Breast epithelium (tissue), 4 donors: ENCODE measurements at regions of chr3 and their contacts with region 1.

Region 1: GRCh38 chr3:170307671-170308403 is 49.7 kb upstream of the SKIL start:
- DNase-seq: no peak
- H3K4me3 ChIP-seq: no peak overlapping the region
- H3K27ac ChIP-seq: no peak overlapping the region
- H3K4me1 ChIP-seq: no peaks in the 10 kb centered on the region
- H3K27me3 ChIP-seq: no peaks in the 10 kb centered on the region
- CTCF ChIP-seq: no peak
- POLR2A ChIP-seq: no peak

Region 2: DNA sequence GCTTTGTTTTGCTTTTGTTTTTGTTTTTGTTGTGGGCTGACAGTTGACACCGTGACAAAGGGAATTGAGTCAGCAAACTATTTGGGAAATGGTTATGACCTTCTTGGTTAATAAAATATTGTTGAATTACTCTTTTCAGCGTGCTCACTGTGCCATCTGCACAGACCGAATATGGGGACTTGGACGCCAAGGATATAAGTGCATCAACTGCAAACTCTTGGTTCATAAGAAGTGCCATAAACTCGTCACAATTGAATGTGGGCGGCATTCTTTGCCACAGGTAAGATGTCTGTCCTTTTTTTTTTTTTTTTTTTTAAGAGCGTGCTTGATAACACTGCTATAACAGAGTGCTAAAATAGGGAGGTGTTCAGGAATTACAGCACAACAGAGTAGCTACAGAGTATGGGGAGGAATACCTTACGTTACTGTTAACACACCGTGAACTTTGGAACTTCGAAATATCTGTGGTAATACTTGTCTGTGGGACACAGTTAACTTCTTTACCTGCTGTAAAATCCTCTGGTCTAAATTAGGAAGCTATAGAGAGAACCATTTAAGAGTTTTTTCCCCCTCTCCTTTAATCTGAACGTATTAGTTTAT is 37.5 kb before region 1 on chr3:
- intact Hi-C with region 1: no loop called
- DNase-seq: no peak
- H3K4me3 ChIP-seq: no peak overlapping the region
- H3K27ac ChIP-seq: no peak overlapping the region
- H3K4me1 ChIP-seq: no peaks in the 10 kb centered on the region
- H3K27me3 ChIP-seq: no peaks in the 10 kb centered on the region
- CTCF ChIP-seq: no peak
- POLR2A ChIP-seq: no peak

Region 3: GRCh38 chr3:170317954-170318353 is 10.1 kb after region 1 on chr3:
- intact Hi-C with region 1: loop called (anchors 2 kb)
- DNase-seq: no peak
- H3K4me3 ChIP-seq: no peak overlapping the region
- H3K27ac ChIP-seq: no peak overlapping the region
- H3K4me1 ChIP-seq: no peaks in the 10 kb centered on the region
- H3K27me3 ChIP-seq: no peaks in the 10 kb centered on the region
- CTCF ChIP-seq: no peak
- POLR2A ChIP-seq: no peak

Region 4: GRCh38 chr3:170414202-170414663 is 106.4 kb after region 1 on chr3:
- intact Hi-C with region 1: loop called (anchors 5 kb)
- DNase-seq: peak in 1 of 2 donors; percentile 32
- H3K4me3 ChIP-seq: no peak overlapping the region
- H3K27ac ChIP-seq: no peak overlapping the region
- H3K4me1 ChIP-seq: peaks cover 0 to 4% of the 10 kb centered on the region in 2 donors
- H3K27me3 ChIP-seq: no peaks in the 10 kb centered on the region
- CTCF ChIP-seq: peak; percentile 76 to 91 (median 89)
- POLR2A ChIP-seq: no peak

Region 5: GRCh38 chr3:170563712-170564423 is 256.0 kb after region 1 on chr3:
- intact Hi-C with region 1: no loop called
- DNase-seq: no peak
- H3K4me3 ChIP-seq: peak overlapping the region in 1 of 3 donors; percentile 45
- H3K27ac ChIP-seq: peak overlapping the region in 1 of 2 donors; percentile 32
- H3K4me1 ChIP-seq: no peaks in the 10 kb centered on the region
- H3K27me3 ChIP-seq: no peaks in the 10 kb centered on the region
- CTCF ChIP-seq: no peak
- POLR2A ChIP-seq: no peak